ENCODE measurements at regions of chr4 and their contacts with region 1.

Region 1: GRCh38 chr4:98995183-98996055 is at the start of gene METAP1:
- DNase-seq: peak; percentile 93 to 96
- ATAC-seq: peak; percentile 88 to 90
- H3K4me3 ChIP-seq: peak within 1 kb of the TSS; percentile 76 to 100 (median 93)
- H3K27ac ChIP-seq: peak within 1 kb of the TSS; percentile 87 to 97 (median 96)
- H3K4me1 ChIP-seq: peaks cover 13 to 16% of the 10 kb centered on the region in 2 donors
- H3K27me3 ChIP-seq: no peaks in the 10 kb centered on the region
- CTCF ChIP-seq: peak; percentile 55 to 69 (median 56)
- POLR2A ChIP-seq: peak; percentile 70 to 75
- total RNA-seq, gene METAP1: 33.3 to 45.0 (median 37.9) TPM

Region 2: GRCh38 chr4:98658287-98659105 is 336.9 kb before region 1 on chr4 and contains the start of gene TSPAN5:
- in situ Hi-C with region 1: no loop called
- intact Hi-C with region 1: loop called (anchors 5 kb)
- DNase-seq: peak; percentile 30 to 48
- ATAC-seq: peak; percentile 51 to 55
- H3K4me3 ChIP-seq: peak within 1 kb of the TSS; percentile 57 to 75 (median 69)
- H3K27ac ChIP-seq: peak within 1 kb of the TSS; percentile 74 to 81 (median 78)
- H3K4me1 ChIP-seq: peaks cover 21 to 28% of the 10 kb centered on the region in 2 donors
- H3K27me3 ChIP-seq: peaks cover 0 to 17% (median 0%) of the 10 kb centered on the region in 3 donors
- CTCF ChIP-seq: no peak
- POLR2A ChIP-seq: peak; percentile 54 to 67
- total RNA-seq, gene TSPAN5: 0.55 to 18.7 (median 0.79) TPM

Region 3: DNA sequence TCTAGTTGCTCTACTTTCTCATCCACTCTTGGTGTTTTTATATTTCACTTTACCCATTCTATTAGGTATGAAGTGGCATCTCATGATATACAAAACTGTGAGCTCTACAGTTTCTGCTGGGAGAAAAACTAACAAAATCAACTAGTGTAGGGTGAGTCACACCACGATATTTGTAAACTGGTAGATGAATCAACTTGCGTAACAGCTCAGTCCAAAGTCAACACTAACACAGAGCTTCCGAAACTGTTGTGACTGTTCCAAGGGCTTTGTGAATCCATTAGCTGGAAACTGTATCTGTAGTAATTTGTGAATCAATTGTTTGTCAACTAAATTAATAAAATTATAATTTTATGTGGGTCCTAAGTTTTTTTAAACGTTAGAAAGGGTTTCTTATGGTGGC is 217.2 kb before region 1 on chr4:
- in situ Hi-C with region 1: no loop called
- intact Hi-C with region 1: no loop called
- DNase-seq: no peak
- ATAC-seq: no peak
- H3K4me3 ChIP-seq: no peak overlapping the region
- H3K27ac ChIP-seq: no peak overlapping the region
- H3K4me1 ChIP-seq: no peaks in the 10 kb centered on the region
- H3K27me3 ChIP-seq: no peaks in the 10 kb centered on the region
- CTCF ChIP-seq: no peak
- POLR2A ChIP-seq: no peak

Region 4: DNA sequence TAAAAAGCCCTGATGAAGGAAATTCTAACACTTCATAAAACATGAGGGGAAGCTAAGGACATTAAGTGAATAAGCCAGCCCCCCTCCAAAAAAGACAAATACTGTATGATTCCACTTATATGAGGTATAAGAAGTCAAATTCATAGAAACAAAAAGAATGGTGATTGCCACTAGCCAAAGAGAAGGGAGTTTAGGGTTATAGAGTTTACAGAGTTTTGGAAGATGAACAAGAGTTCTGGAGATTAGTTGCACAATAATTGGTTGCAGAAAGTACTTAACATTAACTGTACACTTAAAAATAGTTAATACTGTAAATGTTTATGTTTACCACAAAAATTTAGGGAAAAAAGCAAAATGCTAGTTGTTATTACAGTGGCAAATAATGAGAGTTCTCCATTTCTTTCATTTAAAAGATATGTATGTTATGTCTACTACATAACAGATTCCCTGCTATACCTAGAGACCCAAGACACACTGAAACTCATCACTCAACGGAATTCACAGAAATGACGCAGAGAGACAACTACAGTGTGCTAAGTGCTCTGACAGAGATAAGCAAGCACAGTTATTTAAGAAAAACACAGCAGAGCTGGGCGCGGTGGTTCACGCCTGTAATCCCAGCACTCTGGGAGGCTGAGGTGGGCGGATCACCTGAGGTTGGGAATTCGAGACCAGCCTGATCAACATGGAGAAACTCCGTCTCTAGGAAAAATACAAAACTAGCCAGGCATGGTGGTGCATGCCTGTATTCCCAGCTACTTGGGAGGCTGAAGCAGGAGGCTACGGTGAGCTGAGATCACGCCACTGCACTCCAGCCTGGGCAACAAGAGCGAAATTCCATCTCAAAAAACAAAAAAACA is 103.7 kb before region 1 on chr4:
- in situ Hi-C with region 1: no loop called
- intact Hi-C with region 1: no loop called
- DNase-seq: no peak
- ATAC-seq: no peak
- H3K4me3 ChIP-seq: no peak overlapping the region
- H3K27ac ChIP-seq: no peak overlapping the region
- H3K4me1 ChIP-seq: no peaks in the 10 kb centered on the region
- H3K27me3 ChIP-seq: no peaks in the 10 kb centered on the region
- CTCF ChIP-seq: no peak
- POLR2A ChIP-seq: no peak

Region 5: GRCh38 chr4:98939892-98940298 is 55.5 kb before region 1 on chr4:
- in situ Hi-C with region 1: loop called in 2 of 4 experiments (anchors 5 to 10 kb)
- intact Hi-C with region 1: no loop called
- DNase-seq: no peak
- ATAC-seq: peak in 1 of 2 donors; percentile 41
- H3K4me3 ChIP-seq: no peak overlapping the region
- H3K27ac ChIP-seq: no peak overlapping the region
- H3K4me1 ChIP-seq: no peaks in the 10 kb centered on the region
- H3K27me3 ChIP-seq: no peaks in the 10 kb centered on the region
- CTCF ChIP-seq: peak; percentile 24 to 64 (median 42)
- POLR2A ChIP-seq: no peak

Region 6: DNA sequence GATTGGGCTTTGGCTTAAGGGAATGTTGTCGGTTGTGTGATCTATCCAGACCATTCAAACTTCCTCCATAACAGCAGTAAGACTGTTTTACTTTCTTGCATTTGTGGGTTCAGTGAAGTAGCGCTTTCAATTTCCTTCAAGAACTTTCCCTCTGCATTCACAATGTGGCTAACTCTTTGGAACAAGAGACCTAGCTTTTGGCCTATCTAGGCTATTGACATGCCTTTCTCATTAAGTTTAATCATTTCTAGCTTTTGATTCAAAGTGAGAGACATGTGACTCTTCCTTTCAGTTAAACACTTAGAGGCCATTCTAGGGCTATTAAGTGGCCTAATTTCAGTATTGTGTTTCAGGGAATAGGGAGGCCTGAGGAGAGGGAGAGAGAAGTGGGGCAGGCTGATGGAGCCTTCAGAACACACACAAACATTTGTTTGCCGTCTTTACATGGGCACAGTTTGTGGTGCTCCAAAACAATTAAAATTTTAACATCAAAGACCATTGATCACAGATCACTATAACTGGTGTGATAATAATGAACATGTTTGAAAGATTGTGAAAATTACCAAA is 59.1 kb after region 1 on chr4:
- in situ Hi-C with region 1: loop called (anchors 5 to 10 kb)
- intact Hi-C with region 1: loop called (anchors 1 kb)
- DNase-seq: no peak
- ATAC-seq: no peak
- H3K4me3 ChIP-seq: no peak overlapping the region
- H3K27ac ChIP-seq: no peak overlapping the region
- H3K4me1 ChIP-seq: no peaks in the 10 kb centered on the region
- H3K27me3 ChIP-seq: no peaks in the 10 kb centered on the region
- CTCF ChIP-seq: no peak
- POLR2A ChIP-seq: no peak

Region 7: DNA sequence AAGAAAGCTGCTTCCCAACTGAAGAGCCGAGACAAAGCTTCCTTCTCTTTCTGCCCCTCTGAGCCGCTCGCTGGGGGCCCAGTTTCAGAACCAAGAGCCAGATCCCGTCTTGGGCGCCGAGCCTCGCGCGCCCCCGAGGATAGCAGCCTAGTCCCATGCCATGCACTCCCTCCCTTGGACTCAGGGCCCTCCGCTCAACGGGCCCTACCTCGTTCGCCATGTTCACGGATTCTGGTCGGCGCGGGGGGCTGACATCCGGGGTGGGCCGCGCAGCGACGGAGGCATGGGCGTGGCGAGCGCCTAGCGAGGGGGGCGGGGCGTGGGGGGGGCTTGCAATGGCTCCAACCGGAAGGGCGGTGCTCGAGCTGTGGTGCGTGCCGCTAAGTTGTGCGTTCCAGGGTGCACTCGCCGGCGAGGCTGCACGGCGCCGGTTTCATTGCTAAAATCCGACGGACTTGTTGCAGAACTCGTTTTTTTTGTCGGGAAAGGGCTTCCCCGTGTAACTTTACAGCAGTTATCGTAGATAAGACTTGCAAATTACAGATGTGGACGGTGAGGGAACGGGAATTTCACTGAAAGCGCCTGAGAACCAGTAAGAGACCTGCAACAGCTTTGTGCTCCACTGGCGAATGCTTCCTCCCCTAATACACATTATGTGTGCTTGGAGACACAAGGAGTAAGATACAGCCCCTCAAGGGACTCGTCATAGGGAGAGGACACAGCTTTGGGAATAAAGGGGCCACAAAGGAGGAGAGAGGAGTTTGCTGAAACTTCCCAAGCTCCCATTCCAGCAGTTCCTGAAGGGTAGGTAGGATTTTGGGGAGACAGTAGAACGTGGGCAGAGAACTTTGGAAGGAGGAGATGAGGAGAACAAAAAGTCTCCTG is 93.3 kb after region 1 on chr4 and contains the start of gene ADH5:
- in situ Hi-C with region 1: no loop called
- intact Hi-C with region 1: loop called (anchors 1 kb)
- DNase-seq: peak; percentile 79 to 87
- ATAC-seq: peak; percentile 84 to 85
- H3K4me3 ChIP-seq: peak within 1 kb of the TSS; percentile 70 to 92 (median 73)
- H3K27ac ChIP-seq: peak within 1 kb of the TSS; percentile 87 to 97 (median 93)
- H3K4me1 ChIP-seq: peaks cover 0 to 23% of the 10 kb centered on the region in 2 donors
- H3K27me3 ChIP-seq: no peaks in the 10 kb centered on the region
- CTCF ChIP-seq: no peak
- POLR2A ChIP-seq: peak; percentile 86 to 87
- total RNA-seq, gene ADH5: 55.2 to 101 (median 72.6) TPM

Region 8: DNA sequence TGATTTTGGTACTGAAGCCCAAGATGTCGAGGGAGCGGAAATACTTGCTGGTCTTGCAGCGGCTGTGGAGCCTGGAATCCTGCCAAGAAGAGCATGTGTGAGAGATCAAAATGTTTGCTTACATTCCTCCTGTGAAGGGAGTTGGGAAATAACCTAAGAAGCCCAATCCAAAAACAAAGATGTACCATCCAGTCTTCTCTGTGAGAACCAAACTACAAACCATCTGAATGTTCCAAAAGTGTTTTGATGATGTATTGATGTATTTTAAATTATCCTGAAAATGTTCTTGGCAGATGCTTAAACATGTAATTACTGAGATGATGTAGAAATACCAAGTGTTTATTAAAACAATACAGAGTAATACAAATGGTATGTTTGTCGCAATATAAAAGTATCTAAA is 305.5 kb after region 1 on chr4:
- in situ Hi-C with region 1: no loop called
- intact Hi-C with region 1: no loop called
- DNase-seq: peak; percentile 79 to 84
- ATAC-seq: peak; percentile 90 to 96
- H3K4me3 ChIP-seq: no peak overlapping the region
- H3K27ac ChIP-seq: peak overlapping the region; percentile 56 to 69 (median 60)
- H3K4me1 ChIP-seq: peaks cover 10 to 16% of the 10 kb centered on the region in 2 donors
- H3K27me3 ChIP-seq: no peaks in the 10 kb centered on the region
- CTCF ChIP-seq: no peak
- POLR2A ChIP-seq: no peak

Region 9: GRCh38 chr4:99405433-99406115 is 410.2 kb after region 1 on chr4:
- in situ Hi-C with region 1: loop called in 1 of 4 experiments (anchors 25 kb)
- intact Hi-C with region 1: loop called (anchors 5 kb)
- DNase-seq: peak; percentile 37 to 55
- ATAC-seq: peak; percentile 74 to 84
- H3K4me3 ChIP-seq: no peak overlapping the region
- H3K27ac ChIP-seq: peak overlapping the region; percentile 56 to 71 (median 63)
- H3K4me1 ChIP-seq: peaks cover 0 to 23% of the 10 kb centered on the region in 2 donors
- H3K27me3 ChIP-seq: no peaks in the 10 kb centered on the region
- CTCF ChIP-seq: peak; percentile 94 to 96 (median 95)
- POLR2A ChIP-seq: no peak

Region 10: GRCh38 chr4:99783940-99784339 is 788.5 kb after region 1 on chr4:
- in situ Hi-C with region 1: no loop called
- intact Hi-C with region 1: no loop called
- DNase-seq: no peak
- ATAC-seq: no peak
- H3K4me3 ChIP-seq: no peak overlapping the region
- H3K27ac ChIP-seq: no peak overlapping the region
- H3K4me1 ChIP-seq: no peaks in the 10 kb centered on the region
- H3K27me3 ChIP-seq: no peaks in the 10 kb centered on the region
- CTCF ChIP-seq: no peak
- POLR2A ChIP-seq: no peak

Measured in gastrocnemius medialis (tissue), 4 donors.